Heart left ventricle (tissue), 16 donors: ENCODE measurements at regions of chr2 and their contacts with region 1.

Region 1: DNA sequence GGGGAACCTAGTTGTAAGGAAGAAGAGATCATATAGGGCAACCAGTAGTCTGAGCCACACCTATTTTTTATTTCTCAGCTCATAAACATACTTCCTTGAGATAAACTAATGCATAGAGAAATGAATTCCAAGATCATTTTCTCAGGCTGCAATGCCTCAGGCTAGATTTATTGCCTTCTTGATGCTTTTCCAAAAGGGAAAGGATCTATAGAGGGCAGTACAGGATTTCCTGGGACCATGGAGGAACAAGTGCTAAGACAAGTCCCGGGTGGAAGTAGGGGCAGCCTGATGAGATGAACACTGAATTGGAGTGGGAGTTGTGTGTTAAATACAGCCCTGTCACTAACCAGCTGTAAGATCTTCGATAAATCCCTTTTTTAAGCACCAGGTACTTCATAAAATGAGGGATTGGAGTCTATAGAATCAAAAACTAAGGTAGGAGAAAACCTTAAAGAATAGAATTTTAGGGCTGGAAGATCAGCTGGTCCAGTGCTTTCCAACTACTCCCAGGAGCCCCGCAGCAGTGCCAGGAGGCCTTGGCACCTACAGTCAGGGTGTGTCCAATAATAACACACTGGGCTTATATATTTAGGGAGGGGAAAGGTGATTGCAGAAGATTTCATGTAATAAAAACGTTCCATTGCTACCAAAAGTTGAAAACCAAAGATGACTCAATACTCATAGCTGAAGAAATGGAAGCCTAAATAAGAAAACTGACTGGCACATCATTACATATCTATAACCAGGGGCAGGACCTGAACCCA is 58.1 kb downstream of the SERTAD2 start:
- DNase-seq: no peak
- ATAC-seq: peak in 1 of 4 donors; percentile 44
- H3K4me3 ChIP-seq: no peak overlapping the region
- H3K27ac ChIP-seq: no peak overlapping the region
- H3K4me1 ChIP-seq: peaks cover 0 to 25% (median 5%) of the 10 kb centered on the region in 12 donors
- H3K27me3 ChIP-seq: no peaks in the 10 kb centered on the region
- CTCF ChIP-seq: peak in 7 of 12 donors; percentile 8 to 45 (median 33)
- POLR2A ChIP-seq: no peak

Region 2: DNA sequence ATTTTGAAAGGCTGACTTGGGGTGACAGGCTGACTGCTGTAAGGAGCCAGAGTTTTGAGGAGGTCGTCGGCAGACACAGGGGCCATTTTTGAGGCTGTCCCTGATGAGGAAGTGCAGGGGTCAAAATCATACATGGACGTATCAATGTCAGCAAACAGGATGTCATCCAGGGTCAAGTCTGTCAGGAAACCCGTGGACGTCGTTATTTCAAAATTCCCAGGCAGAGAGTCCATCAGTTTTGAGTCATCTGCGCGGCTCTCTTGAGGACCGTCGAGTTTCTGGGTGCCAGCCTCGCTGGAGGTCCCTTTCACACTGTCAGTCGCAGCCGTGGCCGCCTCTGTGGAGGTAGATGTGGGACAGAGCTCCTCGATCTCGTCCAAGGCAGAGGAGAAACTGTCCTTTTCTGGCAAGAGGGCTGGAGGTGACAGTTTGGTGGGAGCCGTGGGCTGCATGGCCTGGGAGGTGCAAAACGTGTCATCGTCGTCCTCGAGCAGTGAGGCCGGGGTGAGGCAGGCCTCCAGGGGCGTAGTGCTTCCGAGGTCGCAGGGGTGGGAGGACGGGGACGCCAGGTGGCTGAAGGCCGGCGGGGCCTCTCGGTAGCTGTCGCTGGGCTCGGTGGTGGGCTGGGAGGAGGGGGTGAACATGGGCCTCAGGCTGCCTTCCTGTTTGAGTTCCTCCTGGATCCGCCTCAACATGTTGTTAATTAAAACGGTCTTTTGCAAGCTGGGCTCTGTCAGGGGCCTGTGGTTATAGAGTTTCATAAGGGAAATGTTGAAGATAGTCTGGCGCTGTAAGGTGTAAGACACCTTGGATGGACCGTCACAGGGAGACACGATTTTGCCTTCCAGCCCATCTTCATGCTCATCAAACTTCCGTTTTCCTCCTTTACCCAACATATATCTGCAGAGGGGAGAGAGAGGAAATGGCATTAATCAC is 40.7 kb after region 1 on chr2:
- intact Hi-C with region 1: loop called in 3 of 10 experiments (anchors 5 to 10 kb)
- DNase-seq: no peak
- ATAC-seq: peak in 2 of 4 donors; percentile 10 to 27
- H3K4me3 ChIP-seq: no peak overlapping the region
- H3K27ac ChIP-seq: no peak overlapping the region
- H3K4me1 ChIP-seq: peaks cover 0 to 61% (median 29%) of the 10 kb centered on the region in 12 donors
- H3K27me3 ChIP-seq: no peaks in the 10 kb centered on the region
- CTCF ChIP-seq: no peak
- POLR2A ChIP-seq: no peak

Region 3: DNA sequence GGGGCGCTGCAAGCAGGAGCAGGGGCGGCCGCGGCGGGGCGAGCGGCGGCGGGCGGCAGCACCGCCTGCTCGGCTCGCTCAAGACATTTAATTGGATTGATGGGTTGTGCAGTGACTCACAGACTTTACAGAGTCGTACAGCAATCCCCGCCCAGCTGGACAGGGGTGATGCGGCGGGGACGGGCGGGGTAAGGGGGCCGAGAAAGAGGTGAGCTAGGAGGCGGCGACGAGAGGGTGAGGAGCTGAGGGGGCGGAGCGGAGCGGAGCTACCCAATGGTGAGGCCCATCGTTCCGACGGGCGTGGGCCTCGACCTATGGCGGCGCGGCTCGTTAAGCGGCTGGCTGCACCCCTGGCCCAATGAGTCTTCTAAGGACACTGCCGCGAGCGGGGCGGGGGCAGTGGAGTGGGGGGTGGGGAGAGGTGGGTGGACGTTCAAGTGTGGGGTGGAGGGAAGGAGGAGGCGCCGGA is 155.3 kb after region 1 on chr2:
- intact Hi-C with region 1: no loop called
- DNase-seq: peak; percentile 99 to 100 (median 100)
- ATAC-seq: peak; percentile 92 to 95 (median 94)
- H3K4me3 ChIP-seq: peak overlapping the region; percentile 50 to 88 (median 78)
- H3K27ac ChIP-seq: peak overlapping the region; percentile 74 to 99 (median 97)
- H3K4me1 ChIP-seq: peaks cover 0 to 30% (median 16%) of the 10 kb centered on the region in 12 donors
- H3K27me3 ChIP-seq: no peaks in the 10 kb centered on the region
- CTCF ChIP-seq: peak in 4 of 12 donors; percentile 15 to 46 (median 23)
- POLR2A ChIP-seq: peak; percentile 85 to 99

Region 4: GRCh38 chr2:65024149-65024829 is 428.7 kb after region 1 on chr2:
- intact Hi-C with region 1: loop called in 1 of 10 experiments (anchors 10 kb)
- DNase-seq: no peak
- ATAC-seq: peak in 1 of 4 donors; percentile 13
- H3K4me3 ChIP-seq: no peak overlapping the region
- H3K27ac ChIP-seq: no peak overlapping the region
- H3K4me1 ChIP-seq: peaks cover 0 to 18% (median 3%) of the 10 kb centered on the region in 12 donors
- H3K27me3 ChIP-seq: no peaks in the 10 kb centered on the region
- CTCF ChIP-seq: no peak
- POLR2A ChIP-seq: no peak